ENCODE measurements at regions of chr10 and their contacts with region 1.

Region 1: GRCh38 chr10:49564461-49565009 is 25.6 kb upstream of the ERCC6 start:
- DNase-seq: no peak
- H3K4me3 Mint-ChIP-seq: no peak overlapping the region
- H3K27ac Mint-ChIP-seq: no peak overlapping the region
- H3K4me1 Mint-ChIP-seq: peaks cover 11% of the 10 kb centered on the region
- H3K27me3 Mint-ChIP-seq: no peaks in the 10 kb centered on the region

Region 2: DNA sequence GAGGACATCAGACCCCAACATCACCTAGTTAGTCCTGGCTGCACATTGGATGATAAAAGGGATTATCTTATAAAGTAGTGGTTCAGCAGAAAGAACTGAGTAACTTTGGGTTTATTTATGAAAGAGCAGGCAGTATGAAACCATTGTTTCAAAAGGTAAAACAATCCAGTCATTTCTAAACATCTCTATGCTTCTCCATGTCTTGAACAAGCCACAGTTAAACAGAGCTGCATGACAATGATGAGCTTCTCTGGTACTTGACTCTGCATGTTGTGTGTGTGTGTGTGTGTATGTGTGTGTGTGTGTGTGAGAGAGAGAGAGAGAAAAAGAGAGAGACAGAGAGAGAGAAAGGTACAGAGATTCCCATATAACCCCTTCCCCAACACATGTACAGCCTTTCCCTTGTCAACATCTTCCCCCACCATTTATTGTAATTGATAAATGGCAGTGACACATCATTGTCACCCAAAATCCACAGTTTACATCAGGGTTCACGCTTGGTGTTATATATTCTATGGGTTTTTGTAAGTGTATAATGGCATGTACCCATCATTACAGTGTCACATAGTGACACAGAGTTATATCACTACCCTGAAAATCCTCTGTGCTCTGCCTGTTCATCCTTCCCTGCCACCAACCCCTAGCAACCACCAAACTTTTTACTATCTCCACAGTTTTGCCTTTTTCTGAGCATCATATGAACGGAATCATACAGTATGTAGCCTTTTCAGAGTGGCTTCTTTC is 12.8 kb after region 1 on chr10:
- intact Hi-C with region 1: loop called (anchors 1 kb)
- DNase-seq: no peak
- H3K4me3 Mint-ChIP-seq: no peak overlapping the region
- H3K27ac Mint-ChIP-seq: no peak overlapping the region
- H3K4me1 Mint-ChIP-seq: peaks cover 13% of the 10 kb centered on the region
- H3K27me3 Mint-ChIP-seq: peaks cover 2% of the 10 kb centered on the region

Region 3: GRCh38 chr10:49587981-49588380 is 23.4 kb after region 1 on chr10:
- intact Hi-C with region 1: no loop called
- DNase-seq: no peak
- H3K4me3 Mint-ChIP-seq: no peak overlapping the region
- H3K27ac Mint-ChIP-seq: no peak overlapping the region
- H3K4me1 Mint-ChIP-seq: no peaks in the 10 kb centered on the region
- H3K27me3 Mint-ChIP-seq: peaks cover 6% of the 10 kb centered on the region

Measured in activated T-helper 1 cell treated with anti-CD3 and anti-CD28 coated beads, Interleukin-12 subunit alpha, Interleukin-12 subunit beta, Interleukin-2, Interleukin-4 antibody, amounts not matched to agents 30 ng/mL and 10 ng/mL and 1 ng/mL, durations not matched to agents 14 hours and 24 hours and 36 hours (primary cell).